Activated CD4-positive, alpha-beta T cell treated with anti-CD3 and anti-CD28 coated beads, Interleukin-2, amount 10 ng/mL, durations not matched to agents 24 days and 14 days (primary cell): ENCODE measurements at regions of chr22 and their contacts with region 1.

Region 1: DNA sequence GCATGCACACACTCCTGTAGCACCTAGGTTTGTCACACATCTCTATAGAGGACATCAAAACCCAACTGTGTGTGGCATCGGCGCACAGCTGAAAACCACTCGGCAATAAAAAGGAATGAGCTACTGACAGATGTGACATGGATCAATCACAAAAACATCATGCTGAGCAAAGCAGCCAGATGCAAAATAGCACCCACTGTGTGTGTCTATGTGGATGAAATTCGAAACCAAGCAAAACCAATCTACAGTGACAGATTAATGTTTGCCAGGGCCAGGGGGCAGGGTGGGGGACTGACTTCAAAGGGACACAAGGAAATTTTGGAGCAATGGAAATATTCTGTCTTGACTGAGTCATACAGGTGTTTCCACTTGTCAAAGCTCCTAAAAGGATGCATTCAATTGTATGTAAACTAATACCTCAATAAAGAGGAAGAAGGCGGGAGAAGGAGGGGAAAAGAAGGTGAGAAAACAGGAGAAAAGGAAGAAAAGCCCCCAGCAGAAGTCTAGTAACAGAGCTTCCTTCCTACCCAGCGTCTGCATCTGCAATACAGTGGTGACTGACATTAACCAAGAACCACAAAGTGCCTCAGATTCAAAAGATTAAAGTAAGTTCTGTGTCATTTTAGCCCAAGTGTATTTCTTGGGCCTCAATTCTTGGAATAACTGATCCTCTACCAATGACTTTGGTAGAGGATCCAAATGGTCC is 49.8 kb downstream of the PACSIN2 start:
- DNase-seq: peak; percentile 67
- H3K4me3 Mint-ChIP-seq: peak overlapping the region; percentile 23
- H3K27ac Mint-ChIP-seq: peak overlapping the region; percentile 82
- H3K4me1 Mint-ChIP-seq: peaks cover 41% of the 10 kb centered on the region
- H3K27me3 Mint-ChIP-seq: no peaks in the 10 kb centered on the region

Region 2: DNA sequence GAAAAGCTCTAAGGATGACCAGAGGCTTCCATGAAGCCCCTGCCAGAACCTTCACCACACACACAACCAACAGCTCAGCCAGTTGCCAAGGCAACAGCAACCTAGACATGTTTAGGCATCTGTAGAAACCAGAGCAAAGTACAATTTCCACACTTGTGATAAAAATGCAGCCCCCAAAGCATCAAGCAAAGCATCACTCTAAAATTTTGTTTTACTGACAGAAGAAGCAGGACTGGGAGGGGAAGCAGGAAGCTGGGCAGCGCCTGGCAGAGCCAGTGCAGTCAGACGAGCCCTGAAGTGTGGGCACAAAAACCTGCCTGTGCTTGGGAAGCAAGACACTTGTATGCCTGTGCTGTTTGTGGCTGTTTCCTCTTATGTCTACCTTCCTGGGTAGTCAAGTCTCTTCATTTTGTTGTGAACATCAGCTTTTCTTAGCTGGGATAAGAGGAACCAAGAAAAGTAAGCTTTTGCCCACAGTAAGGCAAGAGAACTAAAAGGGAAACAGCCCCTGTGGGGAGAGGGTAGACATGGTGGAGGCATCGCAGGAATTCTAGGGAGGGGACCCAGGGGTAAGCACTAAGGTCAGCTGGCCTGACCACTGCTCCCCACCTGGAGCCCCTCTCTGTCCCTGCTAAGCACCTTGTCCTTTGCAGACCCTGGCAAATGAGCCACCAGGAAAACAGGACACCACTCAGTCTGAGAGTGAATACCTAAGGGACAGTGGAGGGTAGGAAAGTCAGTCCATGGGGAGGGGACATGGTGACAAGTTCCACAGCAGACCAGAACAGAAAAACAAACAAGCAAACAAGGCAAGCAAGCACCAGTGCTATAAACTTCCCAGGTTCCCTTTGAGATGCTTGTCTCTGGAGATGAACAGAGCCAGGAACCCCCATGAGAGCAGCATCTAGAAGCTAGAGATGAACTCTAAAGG is 36.4 kb after region 1 on chr22:
- intact Hi-C with region 1: loop called (anchors 2 kb)
- DNase-seq: peak; percentile 67
- H3K4me3 Mint-ChIP-seq: peak overlapping the region; percentile 52
- H3K27ac Mint-ChIP-seq: peak overlapping the region; percentile 67
- H3K4me1 Mint-ChIP-seq: peaks cover 69% of the 10 kb centered on the region
- H3K27me3 Mint-ChIP-seq: no peaks in the 10 kb centered on the region